Panc1 (cell line): ENCODE measurements at regions of chr2 and their contacts with region 1.

Region 1: DNA sequence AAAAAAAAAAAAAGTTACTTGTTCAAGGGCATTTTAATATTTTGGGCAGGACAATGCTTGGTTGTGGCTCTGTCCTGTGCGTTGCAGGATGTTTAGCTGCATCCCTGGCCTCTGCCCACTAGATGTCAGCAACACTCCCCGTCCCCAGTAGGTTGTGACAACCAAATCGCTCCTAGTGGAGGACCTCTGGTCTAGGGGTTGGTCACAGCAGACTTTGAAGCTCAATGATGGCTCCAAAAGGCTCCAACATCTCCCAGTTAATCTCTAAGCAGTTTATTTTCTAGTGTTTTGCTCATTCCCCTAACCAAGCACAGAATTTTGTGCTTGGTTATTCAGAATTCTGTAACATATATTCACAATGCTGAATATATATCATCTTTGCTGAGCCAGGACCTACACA is 67.0 kb downstream of the CHRNA1 start:
- DNase-seq: peak; percentile 59
- ATAC-seq: peak; percentile 97
- H3K4me3 ChIP-seq: no peak overlapping the region
- H3K27ac ChIP-seq: no peak overlapping the region
- H3K4me1 ChIP-seq: no peaks in the 10 kb centered on the region
- H3K27me3 ChIP-seq: no peaks in the 10 kb centered on the region; the same call in 1 of the 2 replicates
- CTCF ChIP-seq: peak; percentile 94

Region 2: GRCh38 chr2:174748948-174749347 is 51.7 kb after region 1 on chr2:
- CTCF ChIA-PET with region 1: interaction called, 8 read pairs
- POLR2A ChIA-PET with region 1: no interaction called
- in situ Hi-C with region 1: no loop called
- intact Hi-C with region 1: loop called (anchors 5 kb)
- DNase-seq: peak; percentile 27
- ATAC-seq: peak; percentile 92
- H3K4me3 ChIP-seq: no peak overlapping the region
- H3K27ac ChIP-seq: no peak overlapping the region
- H3K4me1 ChIP-seq: no peaks in the 10 kb centered on the region
- H3K27me3 ChIP-seq: no peaks in the 10 kb centered on the region; the same call in 1 of the 2 replicates
- CTCF ChIP-seq: peak; percentile 92